ENCODE measurements at regions of chr20 and their contacts with region 1.

Region 1: GRCh38 chr20:5749952-5750779 is at the start of gene SHLD1:
- DNase-seq: peak; percentile 67 to 90 (median 72)
- ATAC-seq: peak; percentile 95
- H3K4me3 ChIP-seq: peak within 1 kb of the TSS; percentile 48
- H3K27ac ChIP-seq: peak within 1 kb of the TSS; percentile 74
- H3K4me1 ChIP-seq: peaks cover 13 to 14% of the 10 kb centered on the region in 2 experiments
- H3K27me3 ChIP-seq: no peaks in the 10 kb centered on the region
- CTCF ChIP-seq: no peak
- EP300 ChIP-seq: no peak
- POLR2A ChIP-seq: peak; percentile 58
- RAD21 ChIP-seq: no peak
- polyA plus RNA-seq, gene SHLD1: 20.7 to 21.6 TPM

Region 2: GRCh38 chr20:5674176-5674660 is 75.9 kb before region 1 on chr20:
- CTCF ChIA-PET with region 1: no interaction called
- POLR2A ChIA-PET with region 1: no interaction called
- in situ Hi-C with region 1: no loop called
- intact Hi-C with region 1: loop called (anchors 5 kb)
- DNase-seq: peak in 1 of 4 experiments; percentile 28
- ATAC-seq: peak; percentile 44
- H3K4me3 ChIP-seq: no peak overlapping the region
- H3K27ac ChIP-seq: peak overlapping the region; percentile 8; the same call in 1 of the 3 replicates
- H3K4me1 ChIP-seq: peaks cover 6 to 21% of the 10 kb centered on the region in 2 experiments; a peak in 3 of 5 replicates
- H3K27me3 ChIP-seq: no peaks in the 10 kb centered on the region
- CTCF ChIP-seq: no peak
- EP300 ChIP-seq: no peak
- POLR2A ChIP-seq: no peak
- RAD21 ChIP-seq: no peak

Region 3: GRCh38 chr20:5766085-5766764 is 16.1 kb after region 1 on chr20:
- CTCF ChIA-PET with region 1: no interaction called
- POLR2A ChIA-PET with region 1: interaction called, 13 read pairs
- in situ Hi-C with region 1: no loop called
- intact Hi-C with region 1: no loop called
- DNase-seq: no peak
- ATAC-seq: no peak
- H3K4me3 ChIP-seq: no peak overlapping the region
- H3K27ac ChIP-seq: no peak overlapping the region
- H3K4me1 ChIP-seq: peaks cover 10 to 24% of the 10 kb centered on the region in 2 experiments; a peak in 4 of 5 replicates
- H3K27me3 ChIP-seq: no peaks in the 10 kb centered on the region
- CTCF ChIP-seq: no peak
- EP300 ChIP-seq: no peak
- POLR2A ChIP-seq: no peak
- RAD21 ChIP-seq: no peak

Region 4: GRCh38 chr20:5900908-5901307 is 150.7 kb after region 1 on chr20:
- CTCF ChIA-PET with region 1: no interaction called
- POLR2A ChIA-PET with region 1: no interaction called
- in situ Hi-C with region 1: no loop called
- intact Hi-C with region 1: no loop called
- DNase-seq: no peak
- ATAC-seq: no peak
- H3K4me3 ChIP-seq: no peak overlapping the region
- H3K27ac ChIP-seq: no peak overlapping the region
- H3K4me1 ChIP-seq: no peaks in the 10 kb centered on the region
- H3K27me3 ChIP-seq: no peaks in the 10 kb centered on the region
- CTCF ChIP-seq: no peak
- EP300 ChIP-seq: no peak
- POLR2A ChIP-seq: no peak
- RAD21 ChIP-seq: no peak

Measured in K562 (cell line).